Tibial artery (tissue), 4 donors: ENCODE measurements at regions of chr3 and their contacts with region 1.

Region 1: GRCh38 chr3:17023006-17023664 is 138.4 kb downstream of the PLCL2 start:
- DNase-seq: no peak
- H3K4me3 ChIP-seq: no peak overlapping the region
- H3K27ac ChIP-seq: no peak overlapping the region
- H3K4me1 ChIP-seq: no peaks in the 10 kb centered on the region
- H3K27me3 ChIP-seq: no peaks in the 10 kb centered on the region
- CTCF ChIP-seq: no peak

Region 2: DNA sequence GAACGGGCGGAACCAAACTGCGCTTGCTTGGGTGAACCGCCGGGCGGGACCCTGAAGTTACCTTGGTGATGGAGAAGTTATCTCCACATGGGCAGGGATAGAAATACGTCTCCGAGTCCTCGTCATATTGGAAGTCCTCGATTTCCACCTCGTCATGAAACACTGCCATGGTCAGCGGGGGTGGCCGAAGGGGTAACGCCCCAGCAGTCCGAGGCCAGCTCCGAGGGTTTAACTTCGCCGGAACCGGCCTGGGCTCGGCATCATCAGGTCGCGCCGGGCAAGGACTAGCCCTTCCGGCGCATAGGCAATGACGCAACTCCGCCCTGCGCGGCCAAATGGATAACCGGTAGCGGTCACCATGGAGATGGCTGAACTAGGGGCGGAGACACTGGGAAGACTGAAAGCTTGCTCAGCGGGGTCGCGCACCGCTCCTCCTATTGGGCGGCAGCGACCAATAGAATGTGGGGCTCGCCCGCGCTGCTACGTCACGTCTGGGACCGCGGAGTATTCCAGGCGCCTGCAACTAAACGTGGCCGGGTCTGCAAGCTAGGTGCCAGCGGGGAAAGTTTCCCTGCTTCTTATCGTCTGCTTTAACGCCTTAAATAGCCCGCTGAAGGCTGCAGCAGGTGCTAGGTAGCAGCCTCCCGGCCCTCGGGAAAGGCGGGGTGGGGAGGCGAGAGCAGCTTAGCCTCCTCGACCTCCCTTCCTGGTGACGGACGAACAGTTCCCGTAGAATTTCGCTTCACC is 758.3 kb before region 1 on chr3 and contains the starts of genes DPH3 and OXNAD1:
- intact Hi-C with region 1: no loop called
- DNase-seq: peak; percentile 100
- H3K4me3 ChIP-seq: peak within 1 kb of the TSS; percentile 65 to 81
- H3K27ac ChIP-seq: peak within 1 kb of the TSS; percentile 88 to 91
- H3K4me1 ChIP-seq: peaks cover 0 to 54% (median 24%) of the 10 kb centered on the region in 4 donors
- H3K27me3 ChIP-seq: no peaks in the 10 kb centered on the region
- CTCF ChIP-seq: peak in 1 of 2 experiments; percentile 44

Region 3: DNA sequence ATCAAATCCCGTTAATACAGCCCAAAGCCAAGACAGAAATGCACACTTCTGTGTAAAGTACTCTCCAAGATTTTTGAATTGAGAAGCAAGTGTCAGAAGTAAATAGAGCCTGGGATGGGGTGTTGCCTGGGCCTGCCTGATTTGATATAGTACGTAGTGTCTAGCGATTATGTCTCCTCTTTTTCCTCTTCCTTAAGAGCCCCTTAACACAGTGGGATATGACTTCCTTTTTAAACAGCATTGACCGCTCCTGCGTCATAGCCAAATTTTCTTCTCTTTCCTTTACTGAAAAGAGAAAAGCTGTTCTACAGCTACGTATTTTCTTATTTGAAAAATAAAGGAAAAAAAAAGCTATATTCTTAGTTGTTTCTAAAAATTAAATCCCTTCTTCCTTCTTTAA is 40.7 kb before region 1 on chr3:
- intact Hi-C with region 1: no loop called
- DNase-seq: no peak
- H3K4me3 ChIP-seq: no peak overlapping the region
- H3K27ac ChIP-seq: no peak overlapping the region
- H3K4me1 ChIP-seq: peaks cover 0 to 17% (median 2%) of the 10 kb centered on the region in 4 donors
- H3K27me3 ChIP-seq: no peaks in the 10 kb centered on the region
- CTCF ChIP-seq: no peak

Region 4: GRCh38 chr3:17227472-17227871 is 204.3 kb after region 1 on chr3:
- intact Hi-C with region 1: loop called (anchors 10 kb)
- DNase-seq: no peak
- H3K4me3 ChIP-seq: no peak overlapping the region
- H3K27ac ChIP-seq: no peak overlapping the region
- H3K4me1 ChIP-seq: peaks cover 0 to 16% (median 0%) of the 10 kb centered on the region in 4 donors
- H3K27me3 ChIP-seq: no peaks in the 10 kb centered on the region
- CTCF ChIP-seq: no peak

Region 5: GRCh38 chr3:17820704-17821103 is 797.6 kb after region 1 on chr3:
- intact Hi-C with region 1: no loop called
- DNase-seq: no peak
- H3K4me3 ChIP-seq: no peak overlapping the region
- H3K27ac ChIP-seq: no peak overlapping the region
- H3K4me1 ChIP-seq: no peaks in the 10 kb centered on the region
- H3K27me3 ChIP-seq: no peaks in the 10 kb centered on the region
- CTCF ChIP-seq: no peak